Activated CD4-positive, alpha-beta T cell treated with anti-CD3 and anti-CD28 coated beads, Interleukin-2, amount 10 ng/mL, durations not matched to agents 24 days and 14 days (primary cell): ENCODE measurements at regions of chr15 and their contacts with region 1.

Region 1: DNA sequence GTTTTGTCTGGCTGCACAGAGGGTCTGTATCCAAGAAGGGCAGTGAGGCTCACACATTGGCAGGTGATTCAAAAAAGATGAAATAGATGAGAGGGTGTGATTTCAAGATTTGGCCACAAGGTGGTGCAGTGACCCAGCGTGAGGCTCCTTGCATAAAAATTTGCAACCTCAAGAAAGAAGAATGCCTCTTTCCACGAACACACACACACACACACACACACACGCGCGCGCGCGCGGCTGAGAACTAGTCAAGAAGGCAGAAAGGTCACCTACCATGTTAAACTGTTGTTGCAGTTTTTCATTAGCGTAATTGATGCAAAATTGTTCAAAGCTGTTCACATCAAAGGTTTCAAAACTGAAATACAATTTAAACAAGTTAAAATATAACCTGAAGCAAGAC is 39.2 kb downstream of the MYO5C start:
- DNase-seq: peak; percentile 93
- H3K4me3 Mint-ChIP-seq: peak overlapping the region; percentile 59
- H3K27ac Mint-ChIP-seq: peak overlapping the region; percentile 70
- H3K4me1 Mint-ChIP-seq: peaks cover 36% of the 10 kb centered on the region
- H3K27me3 Mint-ChIP-seq: no peaks in the 10 kb centered on the region

Region 2: GRCh38 chr15:52294881-52295420 is 38.6 kb after region 1 on chr15:
- intact Hi-C with region 1: loop called (anchors 5 kb)
- DNase-seq: no peak
- H3K4me3 Mint-ChIP-seq: peak overlapping the region; percentile 43
- H3K27ac Mint-ChIP-seq: no peak overlapping the region
- H3K4me1 Mint-ChIP-seq: peaks cover 17% of the 10 kb centered on the region
- H3K27me3 Mint-ChIP-seq: peaks cover 52% of the 10 kb centered on the region

Region 3: GRCh38 chr15:52735231-52736089 is 479.1 kb after region 1 on chr15:
- intact Hi-C with region 1: loop called (anchors 1 kb)
- DNase-seq: peak; percentile 94
- H3K4me3 Mint-ChIP-seq: no peak overlapping the region
- H3K27ac Mint-ChIP-seq: peak overlapping the region; percentile 18
- H3K4me1 Mint-ChIP-seq: peaks cover 17% of the 10 kb centered on the region
- H3K27me3 Mint-ChIP-seq: peaks cover 8% of the 10 kb centered on the region